ENCODE measurements at regions of chr6 and their contacts with region 1.

Region 1: GRCh38 chr6:160992061-160992979 is 751 bp downstream of the MAP3K4 start:
- DNase-seq: peak; percentile 34
- H3K4me3 Mint-ChIP-seq: peak overlapping the region; percentile 90
- H3K27ac Mint-ChIP-seq: peak overlapping the region; percentile 83
- H3K4me1 Mint-ChIP-seq: peaks cover 28% of the 10 kb centered on the region
- H3K27me3 Mint-ChIP-seq: peaks cover 9% of the 10 kb centered on the region

Region 2: DNA sequence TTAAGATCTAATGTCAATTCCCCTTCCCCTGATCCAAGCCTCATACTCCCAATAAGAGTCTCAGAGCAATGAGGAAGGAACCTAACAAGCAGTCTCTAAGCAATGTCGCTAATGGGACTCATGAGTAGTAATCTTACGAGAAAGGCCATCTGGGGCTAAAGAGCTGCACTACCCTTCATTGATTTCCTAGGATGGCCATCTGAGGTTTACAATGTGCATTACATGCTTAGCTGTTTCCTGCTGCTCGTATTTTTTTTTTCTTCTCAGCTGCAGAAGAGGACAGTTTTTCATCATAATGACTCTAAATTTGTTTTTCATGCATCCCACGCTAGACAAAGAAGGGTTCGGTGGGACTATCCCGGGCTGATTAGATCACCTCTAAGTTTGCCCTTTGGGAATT is 447.5 kb before region 1 on chr6:
- CTCF ChIA-PET with region 1: no interaction called
- POLR2A ChIA-PET with region 1: no interaction called
- DNase-seq: no peak
- H3K4me3 Mint-ChIP-seq: no peak overlapping the region
- H3K27ac Mint-ChIP-seq: no peak overlapping the region
- H3K4me1 Mint-ChIP-seq: no peaks in the 10 kb centered on the region
- H3K27me3 Mint-ChIP-seq: peaks cover 8% of the 10 kb centered on the region

Region 3: GRCh38 chr6:160930547-160931377 is 61.6 kb before region 1 on chr6:
- CTCF ChIA-PET with region 1: interaction called, 14 read pairs
- POLR2A ChIA-PET with region 1: no interaction called
- DNase-seq: peak; percentile 58
- H3K4me3 Mint-ChIP-seq: no peak overlapping the region
- H3K27ac Mint-ChIP-seq: no peak overlapping the region
- H3K4me1 Mint-ChIP-seq: peaks cover 8% of the 10 kb centered on the region
- H3K27me3 Mint-ChIP-seq: peaks cover 25% of the 10 kb centered on the region

Region 4: GRCh38 chr6:160960839-160961238 is 31.5 kb before region 1 on chr6:
- CTCF ChIA-PET with region 1: no interaction called
- POLR2A ChIA-PET with region 1: no interaction called
- DNase-seq: no peak
- H3K4me3 Mint-ChIP-seq: no peak overlapping the region
- H3K27ac Mint-ChIP-seq: no peak overlapping the region
- H3K4me1 Mint-ChIP-seq: no peaks in the 10 kb centered on the region
- H3K27me3 Mint-ChIP-seq: peaks cover 13% of the 10 kb centered on the region

Region 5: DNA sequence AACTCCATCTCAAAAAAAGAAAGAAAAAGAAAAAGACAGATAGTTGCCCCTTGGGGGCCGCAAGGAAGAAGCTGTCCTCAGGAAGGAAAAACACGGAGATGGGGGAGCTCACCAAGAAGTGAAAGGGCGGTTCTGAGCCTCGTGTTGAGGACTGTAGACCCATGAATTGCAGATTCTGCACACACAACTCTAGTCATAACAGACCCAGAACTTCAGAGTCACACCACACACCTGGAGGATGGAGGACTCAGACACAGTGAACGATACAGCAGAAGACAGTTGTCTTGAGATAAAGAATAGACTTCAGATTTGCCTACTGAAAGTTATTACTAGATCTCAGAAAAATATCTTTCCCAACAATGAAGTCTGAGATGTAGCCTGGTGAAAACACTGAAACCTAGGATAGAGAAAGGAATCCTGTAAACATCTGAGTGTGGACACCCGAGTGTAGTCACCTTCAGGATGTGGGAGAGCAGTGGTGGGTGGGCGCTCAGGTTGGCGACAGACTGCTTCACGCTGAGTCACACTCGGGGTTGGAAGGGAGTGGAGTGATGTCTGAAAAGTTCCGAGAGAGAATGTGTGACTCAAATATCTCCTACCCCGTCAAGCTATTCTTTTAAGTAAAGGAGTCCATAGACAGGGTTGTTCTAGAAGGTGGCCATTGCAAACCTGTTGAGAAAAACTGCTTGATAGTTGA is 87.4 kb after region 1 on chr6:
- CTCF ChIA-PET with region 1: no interaction called
- POLR2A ChIA-PET with region 1: interaction called, 17 read pairs
- DNase-seq: peak; percentile 66
- H3K4me3 Mint-ChIP-seq: no peak overlapping the region
- H3K27ac Mint-ChIP-seq: no peak overlapping the region
- H3K4me1 Mint-ChIP-seq: peaks cover 7% of the 10 kb centered on the region
- H3K27me3 Mint-ChIP-seq: no peaks in the 10 kb centered on the region

Measured in activated CD4-positive, alpha-beta memory T cell treated with anti-CD3 and anti-CD28 coated beads, Interleukin-2, amount 10 ng/mL, durations not matched to agents 7 days and 5 days (primary cell).